ENCODE measurements at regions of chr1 and their contacts with region 1.

Region 1: GRCh38 chr1:12434174-12434573 is 183.8 kb downstream of the DHRS3 start:
- DNase-seq: peak; percentile 81
- H3K4me3 Mint-ChIP-seq: peak overlapping the region; percentile 42
- H3K27ac Mint-ChIP-seq: peak overlapping the region; percentile 67
- H3K4me1 Mint-ChIP-seq: peaks cover 63% of the 10 kb centered on the region
- H3K27me3 Mint-ChIP-seq: peaks cover 2% of the 10 kb centered on the region

Region 2: DNA sequence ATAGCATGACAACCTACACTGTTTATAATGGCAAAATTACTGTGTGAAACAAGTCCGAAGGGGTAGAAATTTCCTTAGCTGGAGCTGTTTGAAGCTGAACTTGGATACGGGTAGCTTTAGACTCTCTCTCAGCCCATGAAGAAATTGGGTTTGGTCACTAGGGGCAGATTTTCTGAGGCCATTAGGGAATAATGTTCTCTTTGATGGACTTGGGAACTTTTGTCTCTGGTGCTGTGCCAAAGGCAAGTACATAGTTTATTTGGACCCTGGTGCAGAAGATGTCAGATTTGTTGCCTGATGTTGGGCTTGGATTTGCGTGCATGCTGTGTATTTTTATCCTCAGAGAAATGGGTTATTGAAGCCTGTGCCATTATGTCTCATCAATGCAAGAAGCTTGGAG is 94.8 kb before region 1 on chr1:
- CTCF ChIA-PET with region 1: no interaction called
- POLR2A ChIA-PET with region 1: no interaction called
- DNase-seq: no peak
- H3K4me3 Mint-ChIP-seq: no peak overlapping the region
- H3K27ac Mint-ChIP-seq: no peak overlapping the region
- H3K4me1 Mint-ChIP-seq: peaks cover 26% of the 10 kb centered on the region
- H3K27me3 Mint-ChIP-seq: no peaks in the 10 kb centered on the region

Region 3: DNA sequence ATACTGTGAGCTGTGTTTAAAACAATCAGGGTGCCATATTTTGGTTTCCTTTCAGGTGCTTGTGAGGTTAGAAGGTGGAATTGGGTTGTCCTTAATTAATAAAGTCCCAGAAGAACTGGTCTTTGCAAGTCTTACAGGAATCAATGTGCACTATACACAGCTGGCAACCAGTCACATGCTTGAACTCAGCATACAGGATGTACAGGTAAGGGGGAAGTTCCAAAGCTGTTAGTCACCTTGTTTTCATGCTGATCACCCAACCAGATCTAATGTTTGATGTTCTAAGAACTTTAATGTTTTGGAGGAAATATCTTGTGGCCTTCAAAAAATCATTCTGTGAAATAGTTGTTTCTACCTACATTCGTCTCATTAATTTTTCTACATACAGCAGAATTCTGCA is 48.0 kb before region 1 on chr1:
- CTCF ChIA-PET with region 1: no interaction called
- POLR2A ChIA-PET with region 1: interaction called, 30 read pairs
- DNase-seq: no peak
- H3K4me3 Mint-ChIP-seq: no peak overlapping the region
- H3K27ac Mint-ChIP-seq: peak overlapping the region; percentile 73
- H3K4me1 Mint-ChIP-seq: peaks cover 52% of the 10 kb centered on the region
- H3K27me3 Mint-ChIP-seq: no peaks in the 10 kb centered on the region

Region 4: DNA sequence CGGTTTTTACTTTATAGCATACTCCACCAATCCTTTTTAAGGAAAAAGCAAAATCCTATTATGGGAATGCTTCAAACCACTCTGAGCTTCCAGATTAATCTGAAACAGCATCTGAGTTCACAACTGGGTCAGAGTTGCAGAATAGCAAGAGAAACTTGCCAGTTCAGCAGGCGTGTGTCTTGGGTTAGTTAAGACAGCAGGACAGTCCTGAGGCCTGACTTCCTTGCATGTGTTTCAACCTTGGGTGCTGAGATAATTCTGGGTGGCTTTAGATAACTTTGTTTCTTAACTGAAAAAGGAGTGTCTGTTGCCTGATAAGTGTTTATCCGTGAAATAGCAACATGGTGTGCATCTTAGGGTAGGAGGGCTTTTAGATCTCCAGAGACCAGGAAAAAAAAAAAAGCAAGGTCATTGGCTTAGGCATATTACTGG is 14.6 kb after region 1 on chr1:
- CTCF ChIA-PET with region 1: interaction called, 4 read pairs
- POLR2A ChIA-PET with region 1: interaction called, 22 read pairs
- DNase-seq: no peak
- H3K4me3 Mint-ChIP-seq: no peak overlapping the region
- H3K27ac Mint-ChIP-seq: peak overlapping the region; percentile 89
- H3K4me1 Mint-ChIP-seq: peaks cover 50% of the 10 kb centered on the region
- H3K27me3 Mint-ChIP-seq: peaks cover 51% of the 10 kb centered on the region

Region 5: DNA sequence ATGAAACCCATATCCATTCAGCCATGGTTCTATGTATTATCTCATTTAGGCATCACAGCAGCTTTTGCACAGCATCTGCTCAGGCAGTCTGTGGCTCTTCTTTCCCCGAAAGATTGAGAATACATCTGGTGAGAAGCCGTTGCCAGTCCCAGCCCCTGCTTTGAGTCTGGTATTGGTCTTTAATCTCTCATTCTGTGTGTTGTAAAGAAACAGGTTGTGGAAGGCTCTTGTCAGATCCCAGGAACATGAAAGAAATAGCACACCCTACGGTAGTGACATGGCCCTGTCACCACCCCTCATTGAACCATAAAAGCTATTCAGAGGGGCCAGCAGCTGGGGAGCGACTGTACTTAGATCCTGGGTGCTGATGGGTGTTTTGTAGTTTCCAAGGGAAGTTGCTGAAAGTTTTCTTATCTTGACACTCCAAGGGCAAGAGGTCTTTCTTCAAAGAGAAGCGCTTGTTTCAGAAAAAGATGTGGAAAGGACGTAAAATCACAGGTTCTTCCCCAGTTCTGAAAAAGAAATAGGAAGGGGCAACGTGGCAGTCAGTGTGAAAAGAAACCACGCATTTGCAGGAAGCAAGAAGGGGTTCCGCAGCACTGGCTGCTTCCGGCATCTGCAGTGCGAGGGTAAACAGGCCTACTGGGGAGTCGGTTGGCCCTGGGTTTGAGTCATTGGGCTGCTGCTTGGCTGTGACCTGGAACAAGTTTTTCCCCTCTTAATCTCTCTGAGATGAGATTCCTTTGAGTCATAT is 38.8 kb after region 1 on chr1:
- CTCF ChIA-PET with region 1: interaction called, 3 read pairs
- POLR2A ChIA-PET with region 1: interaction called, 17 read pairs
- DNase-seq: peak; percentile 76
- H3K4me3 Mint-ChIP-seq: peak overlapping the region; percentile 61
- H3K27ac Mint-ChIP-seq: peak overlapping the region; percentile 86
- H3K4me1 Mint-ChIP-seq: peaks cover 70% of the 10 kb centered on the region
- H3K27me3 Mint-ChIP-seq: no peaks in the 10 kb centered on the region

Measured in activated CD4-positive, alpha-beta memory T cell treated with anti-CD3 and anti-CD28 coated beads, Interleukin-2, amount 10 ng/mL, durations not matched to agents 7 days and 5 days (primary cell).